Left ventricle myocardium inferior (tissue), 1 donor: ENCODE measurements at regions of chr9 and their contacts with region 1.

Region 1: GRCh38 chr9:91422758-91423711 is 597 bp downstream of the NFIL3 start:
- DNase-seq: peak; percentile 56
- H3K4me3 ChIP-seq: peak overlapping the region; percentile 81
- H3K27ac ChIP-seq: peak overlapping the region; percentile 95
- H3K4me1 ChIP-seq: peaks cover 65% of the 10 kb centered on the region
- H3K27me3 ChIP-seq: no peaks in the 10 kb centered on the region
- CTCF ChIP-seq: peak; percentile 48

Region 2: DNA sequence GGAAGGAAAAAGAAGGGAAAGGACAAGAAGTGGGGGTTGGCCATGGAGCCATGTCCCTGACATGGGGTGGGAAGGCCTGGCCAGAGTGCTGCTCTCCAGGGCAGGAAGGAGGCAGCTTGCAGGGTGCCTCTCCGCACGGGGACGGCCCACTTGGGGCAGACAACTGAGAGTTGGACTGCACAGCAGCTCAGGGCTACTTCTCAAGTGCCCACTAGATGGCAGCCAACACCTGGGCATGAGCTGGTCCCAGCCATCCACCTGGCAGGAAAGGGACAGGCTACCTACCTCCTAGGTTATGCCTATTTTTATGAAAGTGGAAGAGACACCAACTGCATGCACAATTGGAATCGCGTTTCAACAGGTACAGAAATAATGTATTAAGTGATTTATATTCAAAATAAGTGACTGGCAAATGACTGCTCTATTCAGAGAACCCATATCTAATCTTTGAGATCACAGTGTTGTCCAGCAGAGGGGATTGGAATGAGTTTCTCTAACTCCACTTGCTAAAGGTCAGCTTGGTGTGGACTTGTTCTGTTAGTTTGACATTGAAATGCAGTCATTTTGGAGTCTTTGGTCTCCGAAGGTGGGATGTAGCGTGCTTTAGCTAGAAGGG is 508.1 kb before region 1 on chr9:
- intact Hi-C with region 1: loop called (anchors 10 kb)
- DNase-seq: peak; percentile 59
- H3K4me3 ChIP-seq: no peak overlapping the region
- H3K27ac ChIP-seq: no peak overlapping the region
- H3K4me1 ChIP-seq: peaks cover 8% of the 10 kb centered on the region
- H3K27me3 ChIP-seq: peaks cover 13% of the 10 kb centered on the region
- CTCF ChIP-seq: peak; percentile 92

Region 3: DNA sequence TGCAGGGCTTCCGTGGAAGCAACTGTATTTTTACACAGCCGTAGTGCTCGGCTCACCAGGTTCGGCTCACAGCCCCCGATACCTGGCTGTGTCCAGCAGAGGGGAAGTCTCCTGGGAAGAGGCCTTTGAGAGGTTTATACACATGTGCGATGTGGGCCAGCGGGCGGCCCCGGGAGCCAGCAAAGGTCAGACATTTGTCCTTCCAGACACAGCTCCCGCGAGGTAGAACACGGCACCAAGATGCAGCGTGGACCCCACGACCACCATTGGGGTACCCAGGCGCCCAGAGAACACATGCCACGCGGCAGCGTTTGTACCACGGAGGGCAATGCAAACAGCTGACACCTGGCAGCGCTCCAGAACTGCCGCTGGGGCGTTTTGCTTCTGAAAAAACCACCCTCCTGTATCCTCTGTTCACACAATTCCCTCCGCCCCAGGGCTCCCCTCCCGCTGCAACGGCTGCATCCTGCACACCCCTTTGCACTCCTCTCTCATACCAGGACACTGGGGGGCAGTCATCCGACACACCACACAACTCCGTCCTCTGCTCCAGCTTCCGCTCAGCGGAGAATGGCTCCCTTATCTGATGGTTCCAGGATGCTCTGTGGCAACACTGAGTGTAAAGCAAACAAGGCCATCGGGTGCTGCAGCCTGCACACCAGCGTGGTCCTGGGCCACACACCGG is 386.1 kb before region 1 on chr9:
- intact Hi-C with region 1: loop called (anchors 5 kb)
- DNase-seq: peak; percentile 75
- H3K4me3 ChIP-seq: peak overlapping the region; percentile 24
- H3K27ac ChIP-seq: peak overlapping the region; percentile 25
- H3K4me1 ChIP-seq: peaks cover 16% of the 10 kb centered on the region
- H3K27me3 ChIP-seq: peaks cover 8% of the 10 kb centered on the region
- CTCF ChIP-seq: peak; percentile 82